ENCODE measurements at regions of chr12 and their contacts with region 1.

Region 1: DNA sequence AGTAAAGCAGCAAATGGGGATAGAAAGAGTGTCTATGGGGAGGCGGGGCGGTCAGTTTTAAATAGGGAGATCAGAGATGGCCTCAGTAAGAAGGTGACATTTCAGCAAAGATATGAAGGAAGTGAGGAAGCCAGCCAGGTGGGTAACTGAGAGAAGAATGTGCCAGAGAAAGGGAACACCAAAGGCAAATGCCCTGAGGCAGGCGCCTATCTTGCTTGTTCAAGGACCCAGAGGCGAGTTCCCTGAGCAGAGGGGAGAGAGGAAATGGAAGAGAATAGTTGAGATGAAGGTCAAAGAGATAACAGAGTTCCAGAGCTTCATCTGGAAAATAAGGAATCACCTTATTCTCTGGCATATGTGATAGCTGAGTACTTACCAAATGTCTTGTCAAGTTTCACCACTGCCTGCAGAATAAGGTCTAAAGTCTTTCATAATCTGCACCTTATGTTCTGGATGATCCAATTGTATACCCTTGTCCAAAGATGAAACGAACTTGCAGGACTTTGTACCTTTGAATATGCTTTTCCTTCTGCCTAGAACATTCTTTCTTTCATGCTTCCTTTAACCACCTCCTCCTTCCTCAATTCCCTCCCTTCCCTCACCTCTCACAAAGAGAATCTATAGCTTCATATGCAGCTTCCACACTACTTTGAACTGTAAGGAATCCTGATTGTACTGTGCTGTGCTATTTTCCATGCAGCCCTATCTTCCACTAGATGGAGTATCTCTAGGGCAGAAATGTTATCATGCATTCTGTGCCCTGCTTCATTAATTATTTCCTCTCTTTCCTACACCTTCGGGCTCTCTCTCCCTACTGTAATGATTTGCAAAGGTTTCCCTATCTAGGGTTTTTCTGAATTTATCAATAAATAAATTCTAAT is 38.5 kb downstream of the GNPTAB start:
- H3K4me3 ChIP-seq: no peak overlapping the region
- H3K27ac ChIP-seq: no peak overlapping the region
- H3K4me1 ChIP-seq: no peaks in the 10 kb centered on the region
- CTCF ChIP-seq: peak; percentile 33; the same call in 1 of the 2 replicates

Region 2: DNA sequence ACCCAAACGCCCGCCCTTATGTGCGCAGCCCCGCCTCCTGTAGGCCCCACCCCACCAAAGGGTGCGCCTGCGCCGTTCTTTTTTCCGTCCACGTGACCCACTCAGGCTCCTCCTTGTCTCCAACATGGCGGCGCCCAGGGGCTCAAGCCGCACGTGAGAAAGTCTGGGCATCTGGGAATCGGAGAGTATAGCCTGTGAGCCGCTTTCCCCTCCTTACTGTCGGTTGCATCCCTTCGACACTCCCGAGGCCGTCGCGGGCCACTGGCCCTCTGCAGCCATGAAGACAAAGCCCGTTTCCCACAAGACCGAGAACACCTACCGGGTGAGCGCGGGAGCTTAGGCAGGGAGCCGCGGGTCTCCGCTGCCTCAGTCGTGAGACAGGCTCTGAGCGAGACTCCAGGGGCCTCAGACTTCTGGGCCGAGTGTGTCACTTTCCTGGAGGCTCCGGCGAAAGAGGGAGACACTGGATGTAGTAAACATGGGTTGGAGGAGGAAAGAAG is 512.2 kb before region 1 on chr12 and contains the start of gene UTP20:
- CTCF ChIA-PET with region 1: no interaction called
- POLR2A ChIA-PET with region 1: no interaction called
- H3K4me3 ChIP-seq: peak within 1 kb of the TSS; percentile 95
- H3K27ac ChIP-seq: no peak within 1 kb of the TSS; the same call in 1 of the 2 replicates
- H3K4me1 ChIP-seq: no peaks in the 10 kb centered on the region
- CTCF ChIP-seq: no peak

Region 3: DNA sequence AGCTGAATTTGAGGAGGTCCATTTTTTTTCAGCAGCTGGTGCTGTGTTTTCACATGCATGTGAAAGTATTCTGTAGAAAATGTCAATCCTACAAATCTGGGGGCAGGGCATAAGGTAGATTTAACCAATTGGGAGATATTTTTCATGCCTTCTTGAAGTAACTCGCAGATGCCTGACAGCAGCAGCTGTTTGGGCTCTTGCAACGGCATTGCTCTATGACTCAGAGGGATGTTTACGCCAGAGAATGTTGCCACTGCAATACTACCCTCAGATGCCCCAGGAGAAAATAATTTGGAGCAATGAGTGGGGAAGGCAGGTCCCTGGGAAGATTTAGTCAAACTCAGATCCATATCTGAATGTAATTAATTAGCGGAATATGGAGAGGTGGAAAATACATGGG is 240.0 kb before region 1 on chr12:
- CTCF ChIA-PET with region 1: no interaction called
- POLR2A ChIA-PET with region 1: no interaction called
- H3K4me3 ChIP-seq: no peak overlapping the region
- H3K27ac ChIP-seq: no peak overlapping the region
- H3K4me1 ChIP-seq: no peaks in the 10 kb centered on the region
- CTCF ChIP-seq: no peak

Region 4: DNA sequence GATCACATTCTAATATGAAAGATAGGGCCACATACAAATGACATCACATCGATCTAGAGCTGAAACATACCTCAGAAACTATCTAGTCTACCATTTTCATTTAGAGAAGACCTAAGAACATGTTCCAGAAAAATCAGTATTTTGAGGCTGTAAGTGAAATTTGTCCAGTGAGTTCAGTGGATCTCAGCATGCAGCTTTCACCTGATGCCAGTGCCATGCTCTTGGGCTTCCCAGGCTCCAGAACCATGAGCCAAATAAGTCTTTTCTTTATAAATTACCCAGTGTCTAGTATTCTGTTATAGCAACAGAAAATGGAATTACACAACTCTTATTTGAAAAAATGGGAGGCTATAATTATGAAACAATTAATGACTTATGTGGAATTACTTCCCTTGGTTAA is 85.9 kb before region 1 on chr12:
- CTCF ChIA-PET with region 1: no interaction called
- POLR2A ChIA-PET with region 1: no interaction called
- H3K4me3 ChIP-seq: no peak overlapping the region
- H3K27ac ChIP-seq: no peak overlapping the region
- H3K4me1 ChIP-seq: peaks cover 15% of the 10 kb centered on the region
- CTCF ChIP-seq: no peak

Region 5: DNA sequence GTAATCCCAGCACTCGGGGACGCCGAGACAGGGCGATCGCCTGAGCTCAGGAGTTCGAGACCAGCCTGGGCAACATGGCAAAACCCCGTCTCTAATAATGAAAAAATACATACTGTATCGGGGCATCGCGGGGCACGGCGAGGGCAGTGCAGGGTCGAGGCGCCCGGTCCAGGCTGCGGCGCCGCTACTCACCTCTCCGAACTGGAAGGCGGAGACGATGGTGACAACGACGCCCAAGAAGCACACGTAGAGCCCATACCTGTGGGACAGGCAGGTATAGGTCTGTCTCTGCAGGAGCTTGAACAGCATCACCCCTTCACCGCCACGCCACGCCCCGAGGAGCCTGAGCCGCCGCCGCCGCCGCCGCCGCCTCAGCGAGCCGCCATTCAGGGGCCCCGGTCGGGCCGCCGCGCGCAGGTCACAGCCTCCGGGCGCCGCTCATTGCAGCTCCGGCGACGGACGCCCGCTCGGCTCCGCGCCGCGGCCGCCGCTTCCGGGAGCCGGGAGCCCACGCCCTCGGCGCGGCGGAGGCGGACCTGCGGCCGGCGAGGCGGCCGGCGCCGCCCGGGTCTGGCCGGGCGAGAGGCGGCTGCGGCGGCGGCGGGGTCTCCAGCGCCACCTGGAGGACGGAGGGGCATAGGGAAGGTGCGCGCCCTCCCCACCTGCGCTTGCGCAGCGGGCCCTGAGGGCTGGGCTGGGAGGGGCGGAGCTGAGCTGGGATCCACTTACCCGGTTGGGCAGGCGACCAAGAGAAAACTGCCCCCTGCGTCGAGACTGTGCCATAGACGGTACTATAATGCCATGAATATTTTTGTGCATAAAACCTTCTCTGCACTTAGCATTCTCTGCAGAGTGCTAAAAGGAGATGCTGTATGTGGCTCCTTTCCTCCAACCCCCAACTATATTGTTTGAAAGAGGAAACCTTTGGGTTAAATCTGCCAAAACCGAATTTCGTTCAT is 38.4 kb after region 1 on chr12 and contains the start of gene GNPTAB:
- CTCF ChIA-PET with region 1: interaction called, 10 read pairs
- POLR2A ChIA-PET with region 1: interaction called, 3 read pairs
- H3K4me3 ChIP-seq: peak within 1 kb of the TSS; percentile 87
- H3K27ac ChIP-seq: peak within 1 kb of the TSS; percentile 86
- H3K4me1 ChIP-seq: no peaks in the 10 kb centered on the region
- CTCF ChIP-seq: peak; percentile 93

Region 6: DNA sequence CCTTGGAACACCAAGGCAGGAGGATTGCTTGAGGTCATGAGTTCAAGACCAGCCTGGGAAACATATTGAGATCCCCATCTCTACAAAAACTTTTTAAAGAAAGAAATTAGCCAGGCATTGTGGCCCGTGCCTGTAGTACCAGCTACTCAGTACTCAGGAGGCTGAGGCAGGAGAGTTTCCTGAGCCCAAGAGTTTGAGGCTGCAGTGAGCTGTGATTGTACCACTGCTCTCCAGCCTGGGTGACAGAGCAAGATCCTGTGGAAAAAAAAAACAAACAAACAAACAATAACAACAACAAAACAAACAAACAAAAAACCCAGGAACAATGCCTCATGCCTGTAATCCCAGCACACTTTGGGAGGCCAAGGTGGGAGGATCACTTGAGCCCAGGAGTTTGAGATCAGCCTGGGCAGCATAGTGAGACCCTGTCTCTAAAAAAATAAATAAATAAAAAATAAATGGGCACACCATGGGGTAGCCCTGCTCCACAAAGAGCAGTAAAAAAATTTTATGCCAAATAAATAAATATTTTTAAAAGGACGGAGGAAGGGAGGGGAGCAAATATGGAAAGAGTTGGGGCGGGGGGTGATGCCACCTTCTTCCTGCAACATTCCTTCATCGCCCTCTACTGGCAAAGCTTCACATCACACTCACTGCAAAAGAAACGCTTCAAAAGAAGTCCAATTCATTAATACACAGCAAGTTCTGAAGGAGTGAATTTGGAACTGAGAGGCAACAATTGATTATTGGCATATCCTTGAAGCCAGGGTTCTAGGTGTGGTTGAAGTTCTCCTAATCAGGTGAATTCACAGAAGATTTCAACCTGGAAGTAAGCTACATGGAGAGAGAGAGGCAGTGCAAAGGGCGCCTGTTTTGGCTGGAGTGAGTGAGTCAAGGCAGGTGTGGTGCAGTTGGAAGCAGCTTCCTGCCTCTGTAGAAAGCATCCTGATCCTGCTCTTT is 47.3 kb after region 1 on chr12:
- CTCF ChIA-PET with region 1: interaction called, 12 read pairs
- POLR2A ChIA-PET with region 1: no interaction called
- H3K4me3 ChIP-seq: no peak overlapping the region
- H3K27ac ChIP-seq: no peak overlapping the region
- H3K4me1 ChIP-seq: no peaks in the 10 kb centered on the region
- CTCF ChIP-seq: 0 out of 2 replicates have a peak, but pooled peaks have one; percentile 54

Measured in HEK293 (cell line).